Cardiac septum (tissue), 1 donor: ENCODE measurements at regions of chr1 and their contacts with region 1.

Region 1: GRCh38 chr1:183841950-183842794 is 37.3 kb downstream of the RGL1 start:
- DNase-seq: no peak

Region 2: DNA sequence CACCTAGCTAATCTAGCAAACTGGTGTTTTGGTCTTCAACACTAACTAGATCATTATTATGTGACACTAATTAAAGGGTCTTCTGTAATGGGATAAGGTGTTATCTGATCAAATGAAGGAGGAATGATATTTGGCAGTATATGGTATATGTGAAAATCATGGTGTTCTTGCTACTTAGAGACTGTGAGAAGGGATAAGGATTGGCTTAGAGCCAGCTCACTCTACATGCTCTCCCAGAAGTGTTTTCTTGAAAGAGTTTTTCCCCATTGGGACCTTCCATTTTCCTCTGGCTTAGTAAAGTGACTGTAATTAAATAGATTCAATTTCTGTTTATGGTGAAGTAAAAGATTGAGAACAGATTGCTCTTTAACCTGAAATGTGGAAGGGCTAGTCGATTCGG is 108.5 kb before region 1 on chr1:
- intact Hi-C with region 1: no loop called
- DNase-seq: no peak

Region 3: GRCh38 chr1:183877321-183877720 is 35.1 kb after region 1 on chr1:
- intact Hi-C with region 1: loop called (anchors 5 kb)
- DNase-seq: no peak

Region 4: DNA sequence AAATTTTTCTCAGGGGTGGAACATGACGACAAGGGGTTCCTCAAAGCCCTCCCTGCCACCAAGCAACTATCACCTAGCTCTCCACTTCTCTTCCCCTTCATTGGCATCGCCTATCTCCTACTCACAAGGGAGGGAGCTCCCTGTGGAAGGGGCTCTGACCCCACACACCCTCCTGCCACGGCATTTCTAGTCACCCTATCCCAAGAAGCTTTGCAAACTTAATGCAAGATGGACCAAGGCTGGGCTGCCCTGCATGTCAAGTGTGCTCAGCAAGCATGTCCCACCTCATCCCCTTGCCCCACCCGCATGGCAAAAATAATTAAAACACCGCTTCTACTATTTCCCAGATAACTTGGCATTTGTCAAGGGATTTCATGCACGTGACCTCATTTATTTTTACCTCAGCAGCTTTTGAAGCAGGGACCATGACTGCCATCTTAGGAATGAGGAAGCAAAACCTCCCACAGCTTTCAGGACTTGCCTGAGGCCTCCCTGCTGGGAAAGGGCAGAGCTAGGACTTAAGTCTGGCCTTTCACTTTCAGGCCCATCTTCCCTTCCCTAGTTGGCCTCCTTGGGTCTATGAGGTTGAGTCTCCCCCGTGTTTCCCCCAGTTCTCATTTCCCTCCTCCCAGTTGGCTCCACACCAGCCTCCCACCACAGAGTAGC is 370.6 kb after region 1 on chr1:
- intact Hi-C with region 1: no loop called
- DNase-seq: no peak